ENCODE measurements at regions of chr1 and their contacts with region 1.

Region 1: DNA sequence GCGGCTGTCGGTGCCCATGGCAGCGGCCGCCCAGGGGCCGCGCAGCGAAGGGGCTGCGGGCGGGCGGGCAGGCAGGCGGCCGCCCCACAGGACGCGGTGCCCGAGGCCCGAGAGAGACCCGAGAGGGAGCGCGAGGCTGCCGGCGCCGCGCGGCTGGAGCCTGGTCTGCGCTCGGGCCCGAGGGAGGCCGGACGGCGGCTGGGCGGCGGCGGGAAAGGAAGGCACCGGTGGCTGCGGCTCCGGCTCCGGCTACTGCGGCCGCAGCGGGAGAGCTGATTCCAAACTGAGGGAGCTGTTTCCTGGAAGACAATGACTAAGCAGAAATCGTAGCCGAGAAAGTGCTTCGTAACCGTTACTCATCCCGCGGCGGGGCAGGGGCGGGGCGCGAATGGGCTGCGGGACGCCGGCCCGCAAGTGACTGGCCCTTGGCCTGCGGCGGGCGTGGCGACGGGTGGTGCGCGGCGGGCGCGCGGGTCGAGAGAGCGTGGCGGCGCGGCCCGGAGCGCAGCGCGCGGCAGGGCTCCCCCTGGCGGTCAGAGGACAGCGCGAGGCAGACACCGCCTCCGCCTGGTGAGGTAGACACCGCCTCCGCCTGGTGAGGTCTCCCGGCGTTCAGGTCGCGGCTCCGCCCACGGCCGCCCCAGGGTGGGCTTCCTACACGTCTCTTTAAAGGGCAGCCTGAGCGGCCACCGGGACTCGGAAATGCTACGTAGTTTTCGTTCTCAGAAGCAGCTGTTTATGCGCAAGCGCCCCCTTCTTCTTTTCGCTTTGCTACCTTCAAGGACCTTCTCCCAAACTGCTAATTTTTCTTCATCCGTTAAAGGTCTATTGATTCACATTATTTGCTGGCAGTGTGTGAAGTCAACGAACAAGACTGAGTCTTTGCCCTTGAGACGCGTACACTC is at the start of gene GCLM:
- DNase-seq: peak; percentile 88 to 97 (median 95)
- ATAC-seq: peak; percentile 93 to 98 (median 96)
- H3K4me3 ChIP-seq: peak within 1 kb of the TSS; percentile 70 to 99 (median 88)
- H3K27ac ChIP-seq: peak within 1 kb of the TSS; percentile 74 to 92 (median 83)
- H3K4me1 ChIP-seq: peaks cover 0 to 41% (median 13%) of the 10 kb centered on the region in 12 donors
- H3K27me3 ChIP-seq: no peaks in the 10 kb centered on the region
- CTCF ChIP-seq: peak; percentile 68 to 100 (median 92)
- POLR2A ChIP-seq: peak in 1 of 2 donors; percentile 69
- total RNA-seq, gene GCLM: 4.2 to 21.9 (median 12.5) TPM

Region 2: GRCh38 chr1:93701619-93702018 is 207.8 kb before region 1 on chr1:
- intact Hi-C with region 1: no loop called
- DNase-seq: peak in 1 of 5 donors; percentile 40
- ATAC-seq: peak in 3 of 4 donors; percentile 10 to 31 (median 23)
- H3K4me3 ChIP-seq: no peak overlapping the region
- H3K27ac ChIP-seq: peak overlapping the region in 2 of 12 donors; percentile 69 to 83
- H3K4me1 ChIP-seq: peaks cover 0 to 41% (median 22%) of the 10 kb centered on the region in 12 donors
- H3K27me3 ChIP-seq: no peaks in the 10 kb centered on the region
- CTCF ChIP-seq: no peak
- POLR2A ChIP-seq: no peak

Region 3: DNA sequence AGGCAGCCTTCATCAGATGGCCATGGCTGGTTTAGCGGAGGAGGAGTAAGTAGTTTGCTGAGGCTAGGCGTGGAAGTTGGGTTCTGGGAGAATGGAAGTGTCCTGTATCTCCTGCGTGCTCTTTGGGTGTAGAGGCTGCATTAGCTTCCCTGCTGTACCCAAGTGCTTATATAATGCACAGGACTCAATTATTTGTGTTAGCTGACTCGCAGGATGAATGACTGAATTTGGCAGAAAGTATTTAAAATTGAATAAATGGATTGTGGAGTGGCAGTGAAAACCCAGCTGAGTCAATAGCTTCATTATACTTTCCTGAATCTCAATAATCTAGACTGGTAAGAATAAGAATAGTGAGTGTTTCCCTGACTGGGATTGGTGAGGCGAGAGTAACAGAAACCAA is 44.1 kb before region 1 on chr1:
- intact Hi-C with region 1: no loop called
- DNase-seq: no peak
- ATAC-seq: no peak
- H3K4me3 ChIP-seq: no peak overlapping the region
- H3K27ac ChIP-seq: no peak overlapping the region
- H3K4me1 ChIP-seq: no peaks in the 10 kb centered on the region
- H3K27me3 ChIP-seq: no peaks in the 10 kb centered on the region
- CTCF ChIP-seq: no peak
- POLR2A ChIP-seq: no peak

Region 4: DNA sequence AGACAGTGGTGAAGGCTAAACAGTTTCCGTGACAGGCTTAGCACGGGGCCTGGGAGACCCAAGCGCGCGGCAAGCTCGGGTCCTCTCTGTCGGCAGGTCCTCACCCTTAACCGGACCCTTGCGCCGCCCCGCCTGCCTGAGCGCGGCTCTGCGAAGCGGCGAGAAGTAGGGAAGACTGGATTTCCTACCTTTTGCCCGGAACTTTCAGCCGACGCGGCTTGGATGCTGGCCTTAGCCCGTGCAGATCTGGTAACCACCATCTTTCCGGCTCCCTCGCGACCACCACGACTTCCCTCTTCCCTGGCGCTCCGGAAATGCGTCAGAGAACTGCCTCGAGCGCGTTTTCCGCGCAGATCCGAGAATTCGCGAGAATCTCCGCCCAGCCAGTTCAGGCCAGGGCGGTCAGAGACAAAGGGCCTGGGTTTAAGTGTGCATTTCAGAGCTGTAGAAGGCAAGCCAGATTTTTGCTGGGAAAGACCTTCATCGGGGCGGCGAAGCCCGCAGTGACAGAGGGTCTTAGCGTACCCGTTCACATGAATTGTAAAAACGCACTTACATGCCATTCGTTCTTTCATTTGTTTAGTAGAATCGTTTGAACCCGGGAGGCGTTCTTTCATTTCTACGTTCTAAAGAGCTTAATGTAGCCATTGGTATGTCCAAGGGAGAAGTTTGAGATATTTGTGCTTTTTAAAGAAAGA is 30.4 kb before region 1 on chr1 and contains the start of gene DNTTIP2:
- intact Hi-C with region 1: loop called in 1 of 10 experiments (anchors 2 kb)
- DNase-seq: peak; percentile 93 to 94 (median 94)
- ATAC-seq: peak; percentile 98 to 99 (median 99)
- H3K4me3 ChIP-seq: peak within 1 kb of the TSS; percentile 54 to 99 (median 89)
- H3K27ac ChIP-seq: peak within 1 kb of the TSS; percentile 60 to 98 (median 90)
- H3K4me1 ChIP-seq: peaks cover 0 to 38% (median 22%) of the 10 kb centered on the region in 12 donors
- H3K27me3 ChIP-seq: no peaks in the 10 kb centered on the region
- CTCF ChIP-seq: no peak
- POLR2A ChIP-seq: peak in 1 of 2 donors; percentile 77
- total RNA-seq, gene DNTTIP2: 17.7 to 47.6 (median 38.8) TPM

Region 5: GRCh38 chr1:94025383-94026340 is 116.3 kb after region 1 on chr1:
- intact Hi-C with region 1: loop called in 1 of 10 experiments (anchors 5 kb)
- DNase-seq: no peak
- ATAC-seq: peak in 2 of 4 donors; percentile 44 to 51
- H3K4me3 ChIP-seq: peak overlapping the region in 1 of 12 donors; percentile 4
- H3K27ac ChIP-seq: no peak overlapping the region
- H3K4me1 ChIP-seq: peaks cover 0 to 23% (median 5%) of the 10 kb centered on the region in 12 donors
- H3K27me3 ChIP-seq: no peaks in the 10 kb centered on the region
- CTCF ChIP-seq: peak; percentile 72 to 89 (median 81)
- POLR2A ChIP-seq: no peak

Region 6: GRCh38 chr1:94247138-94248094 is 338.0 kb after region 1 on chr1:
- intact Hi-C with region 1: no loop called
- DNase-seq: peak; percentile 84 to 91 (median 88)
- ATAC-seq: peak; percentile 83 to 98 (median 94)
- H3K4me3 ChIP-seq: peak overlapping the region; percentile 54 to 98 (median 72)
- H3K27ac ChIP-seq: peak overlapping the region; percentile 78 to 95 (median 88)
- H3K4me1 ChIP-seq: peaks cover 0 to 15% (median 0%) of the 10 kb centered on the region in 12 donors
- H3K27me3 ChIP-seq: peaks cover 0 to 16% (median 0%) of the 10 kb centered on the region in 9 donors
- CTCF ChIP-seq: peak in 2 of 12 donors; percentile 9 to 26
- POLR2A ChIP-seq: peak in 1 of 2 donors; percentile 95

Measured in heart left ventricle (tissue), 16 donors.